Vagina (tissue), 2 donors: ENCODE measurements at regions of chr11 and their contacts with region 1.

Region 1: GRCh38 chr11:75700940-75701339 is 16.7 kb upstream of the MOGAT2 start:
- DNase-seq: no peak
- H3K4me3 ChIP-seq: no peak overlapping the region
- H3K27ac ChIP-seq: no peak overlapping the region
- H3K4me1 ChIP-seq: no peaks in the 10 kb centered on the region
- H3K27me3 ChIP-seq: no peaks in the 10 kb centered on the region
- CTCF ChIP-seq: no peak
- POLR2A ChIP-seq: no peak

Region 2: GRCh38 chr11:75733431-75734107 is 32.6 kb after region 1 on chr11:
- intact Hi-C with region 1: no loop called
- DNase-seq: no peak
- H3K4me3 ChIP-seq: no peak overlapping the region
- H3K27ac ChIP-seq: no peak overlapping the region
- H3K4me1 ChIP-seq: no peaks in the 10 kb centered on the region
- H3K27me3 ChIP-seq: no peaks in the 10 kb centered on the region
- CTCF ChIP-seq: no peak
- POLR2A ChIP-seq: no peak

Region 3: DNA sequence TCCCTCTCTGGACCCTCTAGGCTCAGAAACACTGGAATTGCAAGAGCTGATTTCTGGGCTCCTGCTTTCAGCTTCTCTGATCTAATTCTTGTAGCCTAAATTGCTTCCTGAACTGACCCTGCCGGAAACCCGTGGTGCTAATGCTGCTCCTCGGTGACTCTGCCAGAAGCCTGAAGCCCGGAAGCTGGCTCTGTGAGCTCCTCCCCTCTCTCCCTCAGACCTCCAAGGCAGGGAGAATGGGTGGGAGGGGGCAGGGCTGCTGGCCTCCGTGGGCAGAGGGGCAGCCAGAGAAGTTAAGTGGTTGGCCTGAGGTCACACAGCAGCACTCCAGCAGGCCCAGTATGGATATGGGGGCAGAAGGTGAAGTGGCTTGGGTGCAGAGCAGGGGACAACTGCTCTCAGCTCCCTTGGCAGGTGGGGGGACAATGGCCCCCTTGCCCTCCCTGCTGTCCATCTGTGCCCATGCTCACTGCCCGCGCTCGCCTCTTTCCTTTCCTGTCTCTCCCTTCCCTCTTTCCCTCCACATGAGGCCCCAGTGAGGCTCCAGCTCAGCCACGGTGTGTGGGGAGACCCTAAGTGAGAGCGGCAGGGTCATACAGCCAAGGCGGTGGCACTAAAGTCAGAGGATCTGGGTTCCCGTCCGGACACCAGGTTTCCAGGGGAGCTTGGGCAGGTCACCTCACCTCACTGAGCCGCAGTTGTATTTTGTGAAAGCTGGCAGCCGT is 1382.1 kb after region 1 on chr11:
- intact Hi-C with region 1: loop called (anchors 5 kb)
- DNase-seq: no peak
- H3K4me3 ChIP-seq: peak overlapping the region in 1 of 2 donors; percentile 1
- H3K27ac ChIP-seq: peak overlapping the region; percentile 45
- H3K4me1 ChIP-seq: peaks cover 24% of the 10 kb centered on the region
- H3K27me3 ChIP-seq: no peaks in the 10 kb centered on the region
- CTCF ChIP-seq: no peak
- POLR2A ChIP-seq: no peak